Endothelial cell of umbilical vein (primary cell): ENCODE measurements at regions of chr6 and their contacts with region 1.

Region 1: DNA sequence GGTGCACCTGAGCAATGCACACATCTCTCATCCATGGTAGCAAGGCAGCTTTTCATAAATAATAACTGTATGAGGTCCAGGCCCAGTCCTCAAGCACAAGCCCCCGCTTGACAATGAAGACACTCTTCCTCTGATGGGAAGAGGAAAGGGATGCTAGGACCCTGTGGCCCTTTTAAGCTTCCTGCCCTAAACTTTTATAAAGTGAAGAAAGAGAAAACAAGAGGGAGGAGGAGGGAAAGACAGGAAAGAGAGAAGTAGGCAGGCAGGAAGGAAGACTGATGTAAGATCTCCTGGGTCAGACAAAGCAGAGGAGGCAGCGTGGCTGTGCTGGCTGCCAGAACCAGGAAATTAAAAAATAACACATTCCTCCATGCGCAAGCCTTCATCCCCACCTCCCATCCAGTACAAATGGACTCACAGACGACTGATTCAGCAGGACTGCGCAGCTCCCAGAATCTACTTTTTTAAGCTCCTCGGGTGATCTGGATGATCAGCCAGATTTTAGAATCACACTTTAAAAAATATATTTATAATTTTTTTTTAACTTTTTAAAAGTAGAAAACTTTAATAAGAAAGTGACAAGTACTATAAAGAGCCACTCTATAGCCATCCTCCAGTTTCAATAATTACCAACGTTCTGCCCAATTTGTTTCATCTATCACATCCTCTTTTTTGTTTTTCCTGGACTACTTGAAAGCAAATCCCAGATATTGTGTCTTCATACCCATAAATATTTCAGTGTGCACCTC is 16.5 kb downstream of the TNFAIP3 start:
- DNase-seq: peak; percentile 79
- H3K4me3 ChIP-seq: no peak overlapping the region
- H3K27ac ChIP-seq: peak overlapping the region; percentile 72
- H3K4me1 ChIP-seq: peaks cover 16% of the 10 kb centered on the region
- H3K27me3 ChIP-seq: no peaks in the 10 kb centered on the region
- CTCF ChIP-seq: no peak
- POLR2A ChIP-seq: peak; percentile 54

Region 2: GRCh38 chr6:137903933-137904821 is 20.6 kb after region 1 on chr6:
- CTCF ChIA-PET with region 1: interaction called, 4 read pairs
- POLR2A ChIA-PET with region 1: no interaction called
- dilution Hi-C with region 1: no loop called
- intact Hi-C with region 1: loop called (anchors 2 kb)
- DNase-seq: peak; percentile 36
- H3K4me3 ChIP-seq: no peak overlapping the region
- H3K27ac ChIP-seq: no peak overlapping the region
- H3K4me1 ChIP-seq: peaks cover 18% of the 10 kb centered on the region
- H3K27me3 ChIP-seq: no peaks in the 10 kb centered on the region
- CTCF ChIP-seq: no peak
- POLR2A ChIP-seq: no peak